ENCODE measurements at regions of chr19 and their contacts with region 1.

Region 1: GRCh38 chr19:46924874-46925547 is 64.2 kb downstream of the ARHGAP35 start:
- DNase-seq: peak; percentile 66 to 98
- H3K4me3 ChIP-seq: peak overlapping the region; percentile 50
- H3K27ac ChIP-seq: peak overlapping the region; percentile 95
- H3K4me1 ChIP-seq: peaks cover 65% of the 10 kb centered on the region
- H3K27me3 ChIP-seq: no peaks in the 10 kb centered on the region
- CTCF ChIP-seq: 0 out of 2 replicates have a peak, but pooled peaks have one; percentile 8

Region 2: DNA sequence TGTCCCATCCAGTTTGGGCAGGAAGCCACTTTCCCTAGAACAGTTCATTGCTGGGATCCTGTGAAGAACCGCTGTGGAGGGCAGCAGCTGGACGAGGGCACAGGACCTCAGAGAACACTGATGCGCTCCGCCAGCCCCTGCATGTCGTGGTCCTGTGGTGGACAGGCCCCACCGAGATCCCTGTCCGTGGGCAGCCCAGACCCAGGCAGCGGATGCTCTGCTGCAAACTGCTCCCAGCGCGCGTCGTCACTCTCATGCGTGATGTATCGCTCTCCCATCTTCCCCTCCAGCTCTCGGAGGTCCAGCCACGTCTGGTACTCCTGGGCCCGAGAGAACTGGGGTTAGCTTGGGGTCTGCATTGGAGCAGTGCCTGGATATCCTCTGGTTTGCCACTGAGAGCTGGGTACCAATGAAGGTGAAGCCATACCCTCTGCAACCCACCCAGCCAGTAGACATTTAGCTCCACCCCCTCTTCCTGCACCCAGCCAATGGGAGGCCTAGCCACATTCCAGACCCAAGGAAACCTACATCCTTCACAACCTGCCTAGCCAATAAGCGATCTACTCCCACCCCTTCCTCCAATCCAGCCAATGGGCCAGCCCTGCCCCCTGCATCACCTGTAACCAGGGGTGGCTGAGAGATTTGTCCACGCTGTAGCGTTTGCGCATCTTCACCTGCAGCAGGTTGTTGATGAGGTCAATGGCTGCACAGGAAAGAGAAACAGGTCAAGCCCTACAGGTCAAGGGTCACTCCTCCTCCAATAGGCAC is 250.4 kb before region 1 on chr19:
- CTCF ChIA-PET with region 1: no interaction called
- POLR2A ChIA-PET with region 1: no interaction called
- intact Hi-C with region 1: no loop called
- DNase-seq: no peak
- H3K4me3 ChIP-seq: no peak overlapping the region
- H3K27ac ChIP-seq: no peak overlapping the region
- H3K4me1 ChIP-seq: no peaks in the 10 kb centered on the region
- H3K27me3 ChIP-seq: no peaks in the 10 kb centered on the region
- CTCF ChIP-seq: no peak

Region 3: GRCh38 chr19:46954993-46955812 is 30.2 kb after region 1 on chr19:
- CTCF ChIA-PET with region 1: no interaction called
- POLR2A ChIA-PET with region 1: no interaction called
- intact Hi-C with region 1: no loop called
- DNase-seq: peak in 1 of 2 experiments; percentile 58
- H3K4me3 ChIP-seq: no peak overlapping the region
- H3K27ac ChIP-seq: peak overlapping the region; percentile 37
- H3K4me1 ChIP-seq: peaks cover 33% of the 10 kb centered on the region
- H3K27me3 ChIP-seq: no peaks in the 10 kb centered on the region
- CTCF ChIP-seq: no peak

Region 4: GRCh38 chr19:47195434-47195833 is 270.4 kb after region 1 on chr19:
- CTCF ChIA-PET with region 1: no interaction called
- POLR2A ChIA-PET with region 1: interaction called, 13 read pairs
- intact Hi-C with region 1: no loop called
- DNase-seq: no peak
- H3K4me3 ChIP-seq: no peak overlapping the region
- H3K27ac ChIP-seq: no peak overlapping the region
- H3K4me1 ChIP-seq: no peaks in the 10 kb centered on the region
- H3K27me3 ChIP-seq: no peaks in the 10 kb centered on the region
- CTCF ChIP-seq: no peak